ENCODE measurements at regions of chr10 and their contacts with region 1.

Region 1: GRCh38 chr10:84537447-84537931 is 209.1 kb downstream of the CCSER2 start:
- DNase-seq: peak; percentile 52
- ATAC-seq: peak; percentile 74
- H3K4me3 Mint-ChIP-seq: no peak overlapping the region
- H3K27ac Mint-ChIP-seq: no peak overlapping the region
- H3K4me1 Mint-ChIP-seq: peaks cover 13% of the 10 kb centered on the region
- H3K27me3 Mint-ChIP-seq: peaks cover 16% of the 10 kb centered on the region
- CTCF ChIP-seq: peak; percentile 75

Region 2: DNA sequence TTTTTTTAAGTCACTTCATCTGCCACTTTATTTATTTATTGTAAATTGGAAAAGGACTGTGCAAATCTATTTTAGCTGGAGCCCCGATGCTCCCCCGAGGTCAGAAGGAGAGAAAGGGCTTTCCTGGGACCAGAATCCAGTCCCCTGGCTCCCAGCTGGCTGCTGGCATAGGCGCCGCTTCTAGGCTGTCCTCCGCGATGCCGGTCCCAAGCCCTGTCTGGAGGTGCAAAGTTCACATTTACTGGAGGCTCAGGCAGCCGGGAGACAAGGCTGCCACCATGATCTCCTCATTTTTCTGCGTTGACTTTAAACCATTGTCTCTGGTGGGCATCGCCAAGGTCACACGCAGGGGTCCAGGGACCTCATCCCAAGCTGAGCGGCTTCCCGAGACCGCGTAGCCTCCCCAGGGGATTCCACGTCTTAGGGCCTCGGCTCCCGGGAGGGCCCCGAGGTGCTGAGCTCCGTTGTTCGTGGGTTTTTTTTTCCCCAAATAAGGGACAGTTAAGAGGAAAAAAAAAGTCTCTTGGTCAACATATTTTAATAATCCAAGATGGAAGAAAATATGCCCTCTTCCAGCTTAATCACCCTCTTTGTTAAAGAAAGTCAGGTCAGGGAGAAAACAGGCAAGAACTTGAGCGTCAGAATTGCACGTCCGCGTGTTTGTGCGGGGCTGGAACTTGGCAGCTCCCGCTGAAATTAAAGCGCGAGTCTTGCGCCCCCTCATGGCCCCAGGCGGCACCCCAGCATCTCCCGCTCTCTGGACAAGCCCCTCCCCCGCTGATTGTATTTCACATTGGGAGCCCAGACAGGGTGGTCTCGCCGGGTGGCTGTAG is 280.8 kb before region 1 on chr10:
- CTCF ChIA-PET with region 1: interaction called, 282 read pairs
- POLR2A ChIA-PET with region 1: no interaction called
- intact Hi-C with region 1: no loop called
- DNase-seq: peak; percentile 76
- ATAC-seq: peak; percentile 84
- H3K4me3 Mint-ChIP-seq: no peak overlapping the region
- H3K27ac Mint-ChIP-seq: no peak overlapping the region
- H3K4me1 Mint-ChIP-seq: peaks cover 4% of the 10 kb centered on the region
- H3K27me3 Mint-ChIP-seq: peaks cover 2% of the 10 kb centered on the region
- CTCF ChIP-seq: peak; percentile 72

Region 3: GRCh38 chr10:84333864-84334451 is 203.5 kb before region 1 on chr10:
- CTCF ChIA-PET with region 1: interaction called, 20 read pairs
- POLR2A ChIA-PET with region 1: no interaction called
- intact Hi-C with region 1: no loop called
- DNase-seq: peak; percentile 84
- ATAC-seq: peak; percentile 84
- H3K4me3 Mint-ChIP-seq: peak overlapping the region; percentile 64
- H3K27ac Mint-ChIP-seq: peak overlapping the region; percentile 93
- H3K4me1 Mint-ChIP-seq: peaks cover 22% of the 10 kb centered on the region
- H3K27me3 Mint-ChIP-seq: no peaks in the 10 kb centered on the region
- CTCF ChIP-seq: no peak

Region 4: DNA sequence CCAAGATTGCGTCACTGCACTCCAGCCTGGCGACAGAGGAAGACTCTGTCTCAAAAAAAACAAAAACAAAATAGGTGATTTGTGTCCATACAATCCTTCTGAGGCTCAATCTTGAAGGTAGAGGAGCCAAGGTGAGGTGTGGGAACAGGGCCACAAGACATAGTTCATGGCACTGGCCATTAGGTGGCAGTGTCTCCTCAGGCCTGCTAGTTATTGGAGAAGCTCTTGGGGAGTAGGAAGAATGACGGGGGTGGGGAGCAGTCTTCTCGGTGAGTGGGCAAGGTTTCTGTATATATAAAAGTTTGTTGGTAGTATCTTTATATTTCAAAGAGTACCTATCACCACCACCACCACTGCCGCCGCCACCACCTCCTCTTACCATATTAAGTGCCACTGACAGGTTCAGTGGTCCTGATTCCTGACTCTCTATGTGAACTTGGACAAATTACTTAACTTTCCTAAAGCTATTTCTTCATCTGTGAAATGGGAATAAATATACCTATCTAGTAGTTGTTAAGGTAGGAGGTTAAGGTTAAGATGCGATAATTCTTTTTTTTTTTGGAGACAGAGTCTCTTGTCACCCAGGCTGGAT is 185.1 kb before region 1 on chr10:
- CTCF ChIA-PET with region 1: interaction called, 184 read pairs
- POLR2A ChIA-PET with region 1: no interaction called
- intact Hi-C with region 1: no loop called
- DNase-seq: peak; percentile 82
- ATAC-seq: peak; percentile 88
- H3K4me3 Mint-ChIP-seq: no peak overlapping the region
- H3K27ac Mint-ChIP-seq: peak overlapping the region; percentile 31
- H3K4me1 Mint-ChIP-seq: peaks cover 67% of the 10 kb centered on the region
- H3K27me3 Mint-ChIP-seq: no peaks in the 10 kb centered on the region
- CTCF ChIP-seq: peak; percentile 85

Region 5: GRCh38 chr10:84429926-84430520 is 107.5 kb before region 1 on chr10:
- CTCF ChIA-PET with region 1: interaction called, 32 read pairs
- POLR2A ChIA-PET with region 1: no interaction called
- intact Hi-C with region 1: loop called (anchors 2 kb)
- DNase-seq: peak; percentile 84
- ATAC-seq: peak; percentile 89
- H3K4me3 Mint-ChIP-seq: no peak overlapping the region
- H3K27ac Mint-ChIP-seq: no peak overlapping the region
- H3K4me1 Mint-ChIP-seq: peaks cover 33% of the 10 kb centered on the region
- H3K27me3 Mint-ChIP-seq: no peaks in the 10 kb centered on the region
- CTCF ChIP-seq: peak; percentile 93

Region 6: DNA sequence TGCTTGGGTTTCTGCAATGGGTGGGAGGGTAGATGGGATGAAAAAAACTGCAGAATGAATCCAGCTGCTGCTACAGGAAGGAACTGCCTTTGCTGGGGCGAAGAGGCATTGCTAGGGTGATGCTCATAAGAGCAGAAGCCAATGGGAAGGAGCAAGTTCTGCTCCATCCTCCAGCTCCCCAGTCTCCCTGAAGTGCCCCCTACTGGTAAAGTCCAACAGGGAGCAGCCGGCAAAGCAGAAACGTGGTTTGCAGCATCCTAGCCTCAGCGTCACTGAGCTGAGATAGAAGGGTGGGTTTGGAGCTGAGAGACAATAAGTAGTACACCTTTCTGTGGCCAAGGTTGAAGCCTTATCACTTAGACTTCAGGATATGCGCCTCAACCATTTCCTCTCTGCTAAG is 11.4 kb after region 1 on chr10:
- CTCF ChIA-PET with region 1: interaction called, 60 read pairs
- POLR2A ChIA-PET with region 1: no interaction called
- intact Hi-C with region 1: no loop called
- DNase-seq: no peak
- ATAC-seq: peak; percentile 62
- H3K4me3 Mint-ChIP-seq: no peak overlapping the region
- H3K27ac Mint-ChIP-seq: no peak overlapping the region
- H3K4me1 Mint-ChIP-seq: no peaks in the 10 kb centered on the region
- H3K27me3 Mint-ChIP-seq: peaks cover 11% of the 10 kb centered on the region
- CTCF ChIP-seq: peak; percentile 31